ENCODE measurements at regions of chr2 and their contacts with region 1.

Region 1: DNA sequence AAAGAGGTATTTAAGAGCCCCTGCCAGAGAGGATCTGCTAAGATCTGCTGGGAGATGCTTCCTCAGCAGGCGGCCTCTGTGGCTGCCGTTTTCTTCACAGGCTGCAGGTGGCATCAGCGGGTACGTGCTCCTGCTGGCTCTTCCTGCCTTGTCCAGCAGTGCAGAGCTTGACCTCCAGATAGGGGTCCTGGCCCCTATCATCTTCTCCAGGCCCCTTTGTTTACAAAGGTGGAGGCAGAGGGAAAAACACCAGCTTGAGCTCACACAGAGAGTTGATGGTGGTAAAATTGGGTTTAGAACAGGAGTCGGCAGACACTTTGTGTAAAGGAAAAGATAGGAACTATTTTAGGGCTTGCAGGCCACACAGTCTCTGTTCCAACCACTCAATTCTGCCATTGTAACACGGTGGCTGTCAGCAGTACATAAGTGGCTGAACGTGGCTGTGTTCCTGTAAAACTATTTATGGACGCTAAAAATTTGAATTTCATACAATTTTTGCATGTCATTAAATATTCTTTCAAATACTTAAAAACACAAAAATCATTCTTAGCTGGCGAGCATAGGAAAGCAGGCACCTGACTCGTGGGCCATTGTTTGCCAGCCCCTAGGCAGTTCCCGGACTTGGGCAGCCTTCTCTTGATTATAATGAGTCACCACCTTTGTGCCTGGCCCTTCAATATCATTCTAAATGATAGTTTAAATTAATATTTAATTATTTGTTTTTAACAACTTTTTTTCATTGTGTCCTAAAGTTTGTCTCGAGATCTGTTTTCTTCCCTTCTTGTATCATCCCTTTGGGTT is 98.2 kb upstream of the B3GNT7 start:
- DNase-seq: peak; percentile 77
- ATAC-seq: peak; percentile 85

Region 2: DNA sequence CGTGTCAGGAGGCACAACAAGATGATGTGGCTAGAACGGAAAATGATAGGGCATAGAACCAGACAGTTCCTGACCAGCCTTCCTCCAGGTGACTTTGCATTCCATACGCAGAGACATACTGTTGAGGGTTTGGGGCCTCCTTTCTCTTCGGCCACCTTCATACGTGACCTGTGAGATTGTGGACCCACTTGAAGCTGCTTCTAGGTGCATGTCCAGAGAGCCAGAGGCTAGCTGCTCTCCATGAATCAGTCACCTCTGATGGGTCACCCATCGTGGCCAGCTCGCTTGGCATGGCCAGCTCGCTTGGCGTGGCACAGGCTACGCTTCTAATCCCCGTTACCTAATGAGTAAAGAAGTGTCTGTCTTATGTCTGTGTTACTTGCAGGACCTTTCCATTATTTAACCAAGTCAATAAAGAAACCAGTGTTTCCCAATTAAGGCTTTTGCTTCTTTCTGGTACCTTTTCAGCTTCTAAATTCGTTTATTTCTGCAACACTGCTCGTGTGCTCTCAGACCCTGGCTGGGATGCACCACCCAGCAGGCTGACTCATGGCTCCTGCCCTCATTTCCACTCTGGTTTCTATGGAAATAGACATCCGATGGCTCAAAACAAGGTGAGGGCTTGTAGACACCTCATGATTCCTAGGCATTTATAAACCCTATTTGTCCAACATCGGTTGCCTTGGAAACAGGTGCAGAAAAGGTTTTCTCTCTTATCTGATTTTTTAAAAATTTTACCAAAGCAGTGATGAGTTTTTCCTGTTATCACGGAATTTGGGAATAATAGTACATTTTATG is 11.5 kb after region 1 on chr2:
- intact Hi-C with region 1: no loop called
- DNase-seq: no peak
- ATAC-seq: no peak

Region 3: DNA sequence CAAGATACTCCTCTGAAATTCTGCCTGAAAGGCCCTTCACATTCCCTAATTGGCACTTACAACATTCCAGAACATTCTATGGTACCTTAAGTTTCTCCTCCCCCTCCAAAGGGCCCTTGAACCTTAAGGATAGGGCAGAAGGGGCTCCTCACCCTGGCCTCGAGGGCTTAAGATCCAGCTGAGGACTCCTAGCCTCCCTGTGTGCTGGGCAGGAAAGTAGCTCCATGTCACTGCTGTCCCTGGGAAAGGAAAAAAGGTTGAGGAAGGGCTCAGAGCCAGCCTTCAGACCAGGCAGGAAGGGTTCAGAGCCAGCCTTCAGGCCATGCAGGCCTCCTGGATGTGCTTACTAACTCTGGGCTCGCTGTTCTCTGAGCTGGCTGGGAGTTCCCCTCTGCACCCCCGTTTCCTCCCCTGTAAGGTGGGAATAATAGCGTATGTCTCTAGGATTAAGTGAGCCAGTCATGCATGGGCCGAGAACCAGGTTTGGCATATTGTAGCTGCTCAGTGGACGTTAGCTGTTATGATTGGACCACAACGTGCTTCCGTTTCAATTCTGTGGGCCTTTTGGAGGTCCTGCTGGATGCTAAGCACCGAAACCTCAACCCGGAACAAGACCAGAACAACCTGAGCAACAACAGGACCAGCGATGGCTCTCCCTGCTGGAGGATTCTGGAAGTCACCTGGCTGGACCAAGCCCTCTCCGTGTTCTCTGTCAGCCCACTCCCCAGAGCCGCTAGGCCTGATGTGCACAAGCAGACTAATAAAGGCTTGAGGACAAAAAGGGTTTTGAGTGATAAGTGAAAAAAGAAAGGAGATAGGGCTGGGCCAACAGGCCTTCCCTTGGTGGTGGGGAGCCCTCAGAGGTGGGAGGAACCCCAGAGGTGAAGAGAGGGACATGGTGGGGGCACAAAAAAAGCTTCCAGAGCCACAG is 97.2 kb after region 1 on chr2:
- intact Hi-C with region 1: loop called (anchors 10 kb)
- DNase-seq: no peak
- ATAC-seq: no peak

Region 4: GRCh38 chr2:231627384-231628120 is 330.2 kb after region 1 on chr2:
- intact Hi-C with region 1: no loop called
- DNase-seq: no peak
- ATAC-seq: peak; percentile 69

Measured in sciatic nerve (tissue), 2 donors.